Caco-2 (cell line): ENCODE measurements at regions of chr7 and their contacts with region 1.

Region 1: DNA sequence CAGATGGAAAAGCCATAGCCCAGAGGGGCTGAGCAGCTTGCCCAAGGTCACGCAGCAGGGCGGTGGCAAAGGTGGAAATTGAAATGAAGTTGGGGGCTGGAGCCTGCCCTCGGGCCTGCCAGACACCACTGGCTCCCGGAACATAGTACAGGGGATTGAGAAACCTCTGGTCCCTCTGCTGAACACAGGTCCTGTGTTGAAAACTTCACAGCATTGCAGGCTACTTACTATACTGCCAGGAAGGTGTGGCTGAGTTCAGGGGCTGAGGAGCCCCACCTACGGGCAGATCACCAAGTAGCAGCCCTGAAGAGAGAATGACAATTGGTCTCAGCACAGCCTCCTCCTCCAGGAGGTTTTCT is 326.7 kb downstream of the PLXNA4 start:
- DNase-seq: peak in 1 of 2 experiments; percentile 44
- H3K4me3 ChIP-seq: no peak overlapping the region
- H3K4me3 Mint-ChIP-seq: no peak overlapping the region
- H3K27ac Mint-ChIP-seq: no peak overlapping the region
- H3K4me1 ChIP-seq: peaks cover 5% of the 10 kb centered on the region; the same call in 1 of the 2 replicates
- H3K4me1 Mint-ChIP-seq: peaks cover 8% of the 10 kb centered on the region
- H3K27me3 ChIP-seq: no peaks in the 10 kb centered on the region
- H3K27me3 Mint-ChIP-seq: no peaks in the 10 kb centered on the region
- CTCF ChIP-seq: peak; percentile 25 to 44

Region 2: GRCh38 chr7:132218876-132219275 is 30.7 kb before region 1 on chr7:
- CTCF ChIA-PET with region 1: no interaction called
- POLR2A ChIA-PET with region 1: no interaction called
- intact Hi-C with region 1: loop called (anchors 5 kb)
- DNase-seq: peak; percentile 53 to 58
- H3K4me3 ChIP-seq: no peak overlapping the region
- H3K4me3 Mint-ChIP-seq: no peak overlapping the region
- H3K27ac Mint-ChIP-seq: no peak overlapping the region
- H3K4me1 ChIP-seq: peaks cover 18% of the 10 kb centered on the region; the same call in 1 of the 2 replicates
- H3K4me1 Mint-ChIP-seq: peaks cover 8% of the 10 kb centered on the region
- H3K27me3 ChIP-seq: no peaks in the 10 kb centered on the region
- H3K27me3 Mint-ChIP-seq: no peaks in the 10 kb centered on the region
- CTCF ChIP-seq: no peak

Region 3: DNA sequence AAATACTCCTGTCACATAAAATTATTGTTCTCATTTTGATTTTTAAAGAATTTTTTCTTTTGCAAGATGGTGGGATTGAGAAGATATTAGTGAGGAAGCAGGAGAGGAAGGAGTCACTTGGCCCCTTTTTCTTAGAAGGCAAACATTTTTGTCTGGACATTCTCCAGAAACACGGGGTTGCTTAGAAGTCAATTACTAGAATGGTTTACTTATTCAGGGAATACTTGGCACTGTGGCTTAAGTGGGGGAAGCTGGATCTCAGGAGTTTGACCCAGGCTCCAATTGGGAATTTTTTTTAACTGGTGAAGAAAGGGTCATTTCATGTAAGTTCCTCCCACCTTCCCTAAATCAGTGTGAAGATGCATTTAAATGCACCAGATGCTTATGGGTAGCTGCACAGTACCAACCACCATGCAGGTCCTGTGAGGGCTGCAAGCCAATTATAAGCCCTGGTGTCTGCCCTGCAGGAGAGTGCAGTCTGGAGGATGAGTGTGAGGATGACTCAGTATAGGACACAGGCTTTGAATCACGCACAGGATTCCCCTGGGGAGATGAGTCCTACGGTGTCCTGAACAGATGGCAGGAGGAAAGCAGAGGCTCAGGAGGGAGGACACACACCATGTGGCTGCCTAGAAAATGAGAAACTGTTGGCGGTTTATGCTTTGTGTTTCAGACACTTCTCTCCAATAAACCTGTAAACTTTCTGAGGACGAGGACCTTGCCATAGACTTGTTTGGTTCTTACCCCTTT is 27.6 kb after region 1 on chr7:
- CTCF ChIA-PET with region 1: no interaction called
- POLR2A ChIA-PET with region 1: no interaction called
- intact Hi-C with region 1: no loop called
- DNase-seq: no peak
- H3K4me3 ChIP-seq: no peak overlapping the region
- H3K4me3 Mint-ChIP-seq: no peak overlapping the region
- H3K27ac Mint-ChIP-seq: no peak overlapping the region
- H3K4me1 ChIP-seq: no peaks in the 10 kb centered on the region
- H3K4me1 Mint-ChIP-seq: no peaks in the 10 kb centered on the region
- H3K27me3 ChIP-seq: peaks cover 2% of the 10 kb centered on the region; the same call in 1 of the 2 replicates
- H3K27me3 Mint-ChIP-seq: peaks cover 19% of the 10 kb centered on the region
- CTCF ChIP-seq: no peak